ENCODE measurements at regions of chr16 and their contacts with region 1.

Region 1: DNA sequence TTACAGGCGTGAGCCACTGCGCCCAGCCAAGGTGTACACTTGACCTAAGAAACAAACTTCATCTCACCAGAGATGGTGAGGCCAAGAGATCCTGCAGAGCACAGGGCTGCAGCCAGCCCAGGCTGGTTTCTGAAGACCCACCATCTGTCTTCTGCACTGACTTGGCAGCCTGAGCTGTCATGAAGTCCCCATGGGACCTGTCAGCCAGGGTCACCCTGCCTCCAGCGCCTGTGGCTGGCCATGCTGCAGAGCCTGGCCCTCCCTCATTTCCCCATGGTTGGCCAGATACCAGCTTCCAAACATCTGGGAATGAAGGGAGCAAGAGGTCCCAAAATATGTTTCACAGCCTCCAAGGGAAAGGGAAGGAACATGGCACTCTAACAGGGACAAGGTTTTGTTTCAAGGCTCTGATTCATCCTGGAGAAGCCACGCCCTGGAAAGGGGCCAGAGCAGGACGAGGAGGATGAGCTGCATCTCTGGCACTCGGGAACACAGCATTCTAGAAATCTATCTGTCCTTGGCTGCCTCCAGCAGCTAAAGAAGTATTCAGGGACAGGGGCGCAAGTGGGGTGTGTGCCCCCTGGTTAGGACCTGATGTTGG is 45.3 kb downstream of the DDX19A start:
- DNase-seq: no peak

Region 2: DNA sequence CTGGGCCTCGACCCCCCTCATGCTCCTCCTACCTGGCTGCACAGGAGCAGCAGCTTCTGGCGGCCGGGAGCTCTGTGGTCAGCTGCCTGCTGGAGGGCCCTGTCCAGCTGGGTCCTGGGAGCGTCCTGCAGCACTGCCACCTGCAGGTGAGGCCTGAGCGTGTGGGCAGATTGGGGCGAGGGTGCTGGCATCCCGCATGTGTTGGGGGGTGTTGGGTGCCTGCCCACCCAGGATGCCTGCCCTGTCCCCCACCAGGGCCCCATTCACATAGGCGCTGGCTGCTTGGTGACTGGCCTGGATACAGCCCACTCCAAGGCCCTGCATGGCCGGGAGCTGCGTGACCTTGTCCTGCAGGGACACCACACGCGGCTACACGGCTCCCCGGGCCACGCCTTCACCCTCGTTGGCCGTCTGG is 79.0 kb after region 1 on chr16:
- intact Hi-C with region 1: loop called (anchors 5 kb)
- DNase-seq: no peak

Region 3: GRCh38 chr16:70553645-70554044 is 161.7 kb after region 1 on chr16:
- intact Hi-C with region 1: no loop called
- DNase-seq: no peak